Endothelial cell of umbilical vein (primary cell): ENCODE measurements at regions of chr4 and their contacts with region 1.

Region 1: GRCh38 chr4:168710353-168710946 is 213.6 kb downstream of the PALLD start:
- DNase-seq: peak; percentile 82
- H3K4me3 ChIP-seq: no peak overlapping the region
- H3K27ac ChIP-seq: no peak overlapping the region
- H3K4me1 ChIP-seq: peaks cover 12% of the 10 kb centered on the region
- H3K27me3 ChIP-seq: no peaks in the 10 kb centered on the region
- CTCF ChIP-seq: peak; percentile 36 to 48
- POLR2A ChIP-seq: no peak

Region 2: DNA sequence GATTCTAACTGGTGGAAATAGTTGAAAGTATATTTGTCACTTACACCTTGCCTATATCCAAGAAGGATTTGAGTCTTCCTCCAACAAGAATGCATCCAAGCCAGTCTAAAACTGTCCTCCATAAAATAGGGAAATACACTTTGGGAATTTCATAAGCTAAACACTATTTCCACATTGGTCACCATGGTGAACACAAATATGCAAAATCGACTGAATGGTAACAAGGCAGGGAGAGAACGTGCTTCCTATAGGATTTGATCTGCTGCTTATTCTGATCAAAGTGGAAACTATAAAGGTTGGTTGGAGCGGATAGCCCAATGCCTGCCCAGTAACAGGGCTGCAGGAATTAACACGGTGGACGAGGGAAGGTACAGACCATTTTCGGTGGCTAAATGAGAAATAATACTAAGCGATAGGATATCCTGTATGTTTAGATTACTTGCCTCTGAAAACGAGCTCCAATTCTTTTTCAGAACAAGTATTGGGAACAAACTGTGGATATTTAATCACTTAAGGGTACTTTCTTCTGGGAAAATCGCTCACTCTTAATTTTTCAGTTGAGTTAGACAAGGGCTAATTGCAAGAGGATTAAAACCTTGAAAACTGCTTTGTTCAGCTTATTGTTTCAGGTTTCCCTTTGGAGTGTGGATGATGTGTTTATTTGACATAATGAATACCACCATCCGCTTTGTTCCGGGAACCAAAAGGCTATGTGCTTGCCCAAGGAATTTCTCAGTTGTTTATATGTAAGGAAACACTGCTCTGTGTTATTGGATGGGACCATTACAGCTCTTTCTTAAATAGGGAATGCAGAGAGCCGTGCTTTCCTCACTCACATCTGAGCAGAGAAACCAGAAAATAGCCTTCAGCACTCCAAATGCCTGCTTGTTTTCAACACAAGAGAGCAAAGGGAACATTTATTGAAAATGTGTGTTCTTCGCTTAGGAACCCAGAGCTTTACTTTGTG is 105.2 kb after region 1 on chr4:
- CTCF ChIA-PET with region 1: interaction called, 10 read pairs
- POLR2A ChIA-PET with region 1: no interaction called
- dilution Hi-C with region 1: no loop called
- intact Hi-C with region 1: loop called (anchors 5 kb)
- DNase-seq: peak; percentile 75
- H3K4me3 ChIP-seq: no peak overlapping the region
- H3K27ac ChIP-seq: no peak overlapping the region
- H3K4me1 ChIP-seq: peaks cover 6% of the 10 kb centered on the region
- H3K27me3 ChIP-seq: no peaks in the 10 kb centered on the region
- CTCF ChIP-seq: no peak
- POLR2A ChIP-seq: no peak

Region 3: DNA sequence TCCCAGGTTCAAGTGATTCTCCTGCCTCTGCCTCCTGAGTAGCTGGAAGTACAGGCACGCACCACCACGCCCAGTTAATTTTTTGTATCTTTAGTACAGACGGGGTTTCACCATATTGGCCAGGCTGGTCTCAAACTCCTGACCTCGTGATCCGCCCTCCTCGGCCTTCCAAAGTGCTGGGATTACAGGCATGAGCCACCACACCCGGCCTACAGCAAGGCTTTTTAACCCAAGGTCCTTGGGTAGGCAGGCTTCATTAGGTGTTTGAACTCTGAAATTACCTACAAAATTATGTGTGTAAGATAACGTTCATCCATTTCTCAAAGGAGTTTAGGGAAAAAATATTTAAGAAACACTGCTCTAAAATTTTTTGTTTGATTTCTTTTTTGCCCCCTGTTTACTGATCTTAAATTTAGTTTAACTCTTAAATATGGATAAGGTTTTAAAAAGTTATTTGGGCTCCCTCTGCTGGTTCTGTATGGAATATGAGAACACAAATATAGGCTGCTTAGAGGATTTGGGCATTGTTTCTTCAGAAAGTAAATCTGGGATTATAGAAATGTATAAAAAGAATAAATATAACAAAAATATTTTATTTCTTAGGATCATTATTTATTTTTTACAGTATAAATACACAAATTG is 206.8 kb after region 1 on chr4:
- CTCF ChIA-PET with region 1: interaction called, 78 read pairs
- POLR2A ChIA-PET with region 1: no interaction called
- dilution Hi-C with region 1: no loop called
- intact Hi-C with region 1: loop called (anchors 1 kb)
- DNase-seq: peak; percentile 65
- H3K4me3 ChIP-seq: no peak overlapping the region
- H3K27ac ChIP-seq: no peak overlapping the region
- H3K4me1 ChIP-seq: no peaks in the 10 kb centered on the region
- H3K27me3 ChIP-seq: no peaks in the 10 kb centered on the region
- CTCF ChIP-seq: peak in 1 of 2 donors; percentile 25
- POLR2A ChIP-seq: no peak

Region 4: GRCh38 chr4:168923526-168924194 is 213.2 kb after region 1 on chr4:
- CTCF ChIA-PET with region 1: interaction called, 78 read pairs
- POLR2A ChIA-PET with region 1: no interaction called
- dilution Hi-C with region 1: no loop called
- intact Hi-C with region 1: no loop called
- DNase-seq: peak; percentile 67
- H3K4me3 ChIP-seq: no peak overlapping the region
- H3K27ac ChIP-seq: no peak overlapping the region
- H3K4me1 ChIP-seq: no peaks in the 10 kb centered on the region
- H3K27me3 ChIP-seq: no peaks in the 10 kb centered on the region
- CTCF ChIP-seq: peak; percentile 57 to 66
- POLR2A ChIP-seq: no peak